CD8-positive, alpha-beta T cell (primary cell): ENCODE measurements at regions of chr2 and their contacts with region 1.

Region 1: DNA sequence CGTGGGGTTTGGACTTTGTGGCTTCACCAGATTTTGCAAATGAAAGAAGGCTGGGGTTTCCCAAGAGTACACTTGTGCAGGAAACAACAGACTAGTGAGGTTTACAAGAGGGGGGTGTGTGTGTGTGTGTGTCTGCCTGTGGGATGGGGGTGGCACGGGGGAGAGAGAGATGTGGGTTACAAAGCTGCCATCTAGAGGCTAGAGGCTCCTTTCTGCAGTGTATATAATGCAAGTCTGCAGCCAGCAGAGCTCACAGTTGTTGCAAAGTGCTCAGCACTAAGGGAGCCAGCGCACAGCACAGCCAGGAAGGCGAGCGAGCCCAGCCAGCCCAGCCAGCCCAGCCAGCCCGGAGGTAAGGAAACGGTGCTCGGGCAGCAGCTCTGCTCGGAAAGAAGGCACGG is at the start of gene ACKR3:
- DNase-seq: peak; percentile 46 to 96 (median 77)
- ATAC-seq: peak; percentile 98
- H3K4me3 ChIP-seq: peak within 1 kb of the TSS; percentile 44 to 54
- H3K4me3 Mint-ChIP-seq: peak within 1 kb of the TSS; percentile 84
- H3K27ac ChIP-seq: peak within 1 kb of the TSS in 1 of 2 experiments; percentile 4
- H3K27ac Mint-ChIP-seq: peak within 1 kb of the TSS; percentile 72
- H3K4me1 ChIP-seq: peaks cover 15% of the 10 kb centered on the region
- H3K4me1 Mint-ChIP-seq: peaks cover 33% of the 10 kb centered on the region
- H3K27me3 ChIP-seq: no peaks in the 10 kb centered on the region
- H3K27me3 Mint-ChIP-seq: no peaks in the 10 kb centered on the region
- CTCF ChIP-seq: peak; percentile 53
- total RNA-seq, gene ACKR3: 0.50 to 2.0 TPM

Region 2: GRCh38 chr2:236352761-236353593 is 216.6 kb before region 1 on chr2:
- CTCF ChIA-PET with region 1: interaction called, 22 read pairs
- POLR2A ChIA-PET with region 1: interaction called, 3 read pairs
- intact Hi-C with region 1: loop called (anchors 1 kb)
- DNase-seq: peak in 6 of 9 experiments; percentile 17 to 64 (median 40)
- ATAC-seq: peak; percentile 62
- H3K4me3 ChIP-seq: no peak overlapping the region
- H3K4me3 Mint-ChIP-seq: no peak overlapping the region
- H3K27ac ChIP-seq: no peak overlapping the region
- H3K27ac Mint-ChIP-seq: no peak overlapping the region
- H3K4me1 ChIP-seq: no peaks in the 10 kb centered on the region
- H3K4me1 Mint-ChIP-seq: peaks cover 2% of the 10 kb centered on the region
- H3K27me3 ChIP-seq: no peaks in the 10 kb centered on the region
- H3K27me3 Mint-ChIP-seq: peaks cover 11% of the 10 kb centered on the region
- CTCF ChIP-seq: peak; percentile 96

Region 3: GRCh38 chr2:236536727-236537398 is 32.7 kb before region 1 on chr2:
- CTCF ChIA-PET with region 1: interaction called, 45 read pairs
- POLR2A ChIA-PET with region 1: interaction called, 13 read pairs
- intact Hi-C with region 1: loop called in 1 of 2 experiments (anchors 1 kb)
- DNase-seq: peak; percentile 17 to 81 (median 66)
- ATAC-seq: peak; percentile 94
- H3K4me3 ChIP-seq: peak overlapping the region; percentile 60 to 77
- H3K4me3 Mint-ChIP-seq: peak overlapping the region; percentile 98
- H3K27ac ChIP-seq: peak overlapping the region; percentile 66
- H3K27ac Mint-ChIP-seq: peak overlapping the region; percentile 98
- H3K4me1 ChIP-seq: peaks cover 37% of the 10 kb centered on the region
- H3K4me1 Mint-ChIP-seq: peaks cover 53% of the 10 kb centered on the region
- H3K27me3 ChIP-seq: no peaks in the 10 kb centered on the region
- H3K27me3 Mint-ChIP-seq: no peaks in the 10 kb centered on the region
- CTCF ChIP-seq: no peak

Region 4: GRCh38 chr2:236558993-236559978 is 10.3 kb before region 1 on chr2:
- CTCF ChIA-PET with region 1: interaction called, 18 read pairs
- POLR2A ChIA-PET with region 1: interaction called, 6 read pairs
- intact Hi-C with region 1: no loop called
- DNase-seq: no peak
- ATAC-seq: no peak
- H3K4me3 ChIP-seq: no peak overlapping the region
- H3K4me3 Mint-ChIP-seq: no peak overlapping the region
- H3K27ac ChIP-seq: no peak overlapping the region
- H3K27ac Mint-ChIP-seq: peak overlapping the region; percentile 58
- H3K4me1 ChIP-seq: peaks cover 23% of the 10 kb centered on the region
- H3K4me1 Mint-ChIP-seq: peaks cover 51% of the 10 kb centered on the region
- H3K27me3 ChIP-seq: no peaks in the 10 kb centered on the region
- H3K27me3 Mint-ChIP-seq: no peaks in the 10 kb centered on the region
- CTCF ChIP-seq: no peak

Region 5: GRCh38 chr2:236631281-236631855 is 61.8 kb after region 1 on chr2:
- CTCF ChIA-PET with region 1: no interaction called
- POLR2A ChIA-PET with region 1: no interaction called
- intact Hi-C with region 1: no loop called
- DNase-seq: peak in 1 of 9 experiments; percentile 34
- ATAC-seq: no peak
- H3K4me3 ChIP-seq: no peak overlapping the region
- H3K4me3 Mint-ChIP-seq: no peak overlapping the region
- H3K27ac ChIP-seq: no peak overlapping the region
- H3K27ac Mint-ChIP-seq: no peak overlapping the region
- H3K4me1 ChIP-seq: no peaks in the 10 kb centered on the region
- H3K4me1 Mint-ChIP-seq: no peaks in the 10 kb centered on the region
- H3K27me3 ChIP-seq: no peaks in the 10 kb centered on the region
- H3K27me3 Mint-ChIP-seq: peaks cover 5% of the 10 kb centered on the region
- CTCF ChIP-seq: no peak

Region 6: GRCh38 chr2:237060534-237061312 is 491.1 kb after region 1 on chr2:
- CTCF ChIA-PET with region 1: interaction called, 12 read pairs
- POLR2A ChIA-PET with region 1: no interaction called
- intact Hi-C with region 1: loop called in 1 of 2 experiments (anchors 1 kb)
- DNase-seq: peak in 3 of 9 experiments; percentile 11 to 56 (median 39)
- ATAC-seq: no peak
- H3K4me3 ChIP-seq: no peak overlapping the region
- H3K4me3 Mint-ChIP-seq: no peak overlapping the region
- H3K27ac ChIP-seq: no peak overlapping the region
- H3K27ac Mint-ChIP-seq: no peak overlapping the region
- H3K4me1 ChIP-seq: no peaks in the 10 kb centered on the region
- H3K4me1 Mint-ChIP-seq: no peaks in the 10 kb centered on the region
- H3K27me3 ChIP-seq: no peaks in the 10 kb centered on the region
- H3K27me3 Mint-ChIP-seq: no peaks in the 10 kb centered on the region
- CTCF ChIP-seq: peak; percentile 52

Region 7: DNA sequence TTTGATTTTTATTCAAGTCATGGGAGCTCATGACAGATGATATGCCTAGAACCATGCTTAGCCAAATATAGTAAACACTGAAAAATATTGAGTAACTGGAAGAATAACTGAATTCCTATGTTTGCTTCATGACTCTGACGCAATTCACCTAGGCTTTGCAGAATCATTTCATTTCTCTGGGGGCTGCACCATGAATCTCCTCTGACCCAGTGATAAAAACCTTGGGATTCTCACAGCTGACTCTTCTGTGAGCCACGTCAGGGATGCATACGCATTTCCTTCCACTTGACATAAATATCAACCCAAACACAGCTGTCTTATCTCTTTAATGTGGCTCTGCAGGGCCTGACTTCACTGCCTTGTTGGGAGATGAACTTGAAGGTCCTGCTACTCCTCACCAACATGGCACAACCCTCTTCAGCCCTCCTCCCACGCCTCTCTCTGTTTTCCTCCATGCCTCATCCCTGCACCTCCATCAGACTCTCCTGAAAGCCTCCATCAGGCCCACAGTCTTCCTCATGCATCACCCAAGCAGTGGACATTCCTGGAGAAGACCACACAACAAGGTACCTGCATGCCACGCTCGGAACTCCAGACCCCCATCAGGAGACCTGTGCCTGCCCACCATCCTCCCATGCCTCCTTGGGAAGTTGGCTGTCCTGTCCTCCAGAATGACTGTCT is 814.6 kb after region 1 on chr2:
- CTCF ChIA-PET with region 1: no interaction called
- POLR2A ChIA-PET with region 1: no interaction called
- intact Hi-C with region 1: no loop called
- DNase-seq: no peak
- ATAC-seq: no peak
- H3K4me3 ChIP-seq: no peak overlapping the region
- H3K4me3 Mint-ChIP-seq: no peak overlapping the region
- H3K27ac ChIP-seq: no peak overlapping the region
- H3K27ac Mint-ChIP-seq: no peak overlapping the region
- H3K4me1 ChIP-seq: no peaks in the 10 kb centered on the region
- H3K4me1 Mint-ChIP-seq: no peaks in the 10 kb centered on the region
- H3K27me3 ChIP-seq: no peaks in the 10 kb centered on the region
- H3K27me3 Mint-ChIP-seq: no peaks in the 10 kb centered on the region
- CTCF ChIP-seq: no peak